ENCODE measurements at regions of chr1 and their contacts with region 1.

Region 1: DNA sequence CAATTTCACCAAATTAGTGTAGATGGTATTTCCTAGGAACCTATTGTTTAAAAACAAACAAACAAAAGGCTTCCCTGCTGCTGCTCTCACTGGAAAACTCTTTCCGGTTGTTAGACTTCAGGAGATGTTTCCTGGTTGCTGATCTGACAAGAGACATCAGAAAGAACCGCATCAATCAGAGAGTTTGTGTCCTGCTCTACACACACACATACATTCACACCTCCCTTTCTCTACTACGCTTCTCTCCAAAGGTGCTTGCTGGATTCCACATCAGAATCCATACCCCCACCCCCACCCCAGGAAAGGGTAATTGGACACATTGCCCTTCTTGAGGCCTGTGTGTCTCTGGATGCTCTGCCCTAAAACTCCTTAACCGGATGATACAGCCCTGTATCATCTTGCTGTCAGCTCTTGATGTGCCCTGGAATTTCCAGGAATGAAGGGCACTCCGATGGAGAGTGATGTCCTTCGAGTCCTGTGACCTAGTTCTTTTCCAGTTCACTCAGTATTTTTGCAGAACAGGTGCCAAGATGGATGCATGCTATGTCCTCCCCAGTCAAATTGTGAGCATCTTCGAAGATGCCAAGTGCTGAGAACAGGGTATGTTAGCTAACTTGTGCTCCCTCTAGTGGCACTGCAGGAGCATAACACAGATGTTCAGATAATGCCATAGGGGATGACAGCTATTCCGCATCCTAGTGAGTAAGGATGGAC is 113.7 kb upstream of the SLC35F3 start:
- DNase-seq: no peak
- ATAC-seq: peak; percentile 93

Region 2: DNA sequence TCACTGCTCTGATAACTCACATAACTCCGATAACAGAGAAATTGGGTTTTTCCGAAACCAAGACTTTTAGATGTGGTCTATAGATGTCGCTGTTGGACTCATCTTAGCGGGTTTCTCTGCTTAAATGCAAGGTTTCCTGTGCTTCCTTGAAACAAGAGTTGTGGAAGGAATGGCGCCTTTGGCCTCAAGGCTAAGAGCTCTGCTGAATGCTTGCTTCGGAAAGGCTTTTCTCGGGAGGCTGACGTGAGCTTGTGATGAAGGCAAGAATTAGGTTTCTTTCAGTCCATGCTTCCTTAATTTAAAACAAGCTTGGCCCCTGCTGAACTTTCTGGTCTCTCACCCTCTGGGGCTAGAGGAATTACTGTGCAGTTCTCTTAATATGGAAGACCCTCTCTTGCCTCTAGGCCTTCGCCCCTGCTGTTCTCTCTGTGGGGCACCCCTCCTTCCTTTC is 349.8 kb before region 1 on chr1:
- intact Hi-C with region 1: loop called (anchors 10 kb)
- DNase-seq: no peak
- ATAC-seq: peak; percentile 66

Region 3: DNA sequence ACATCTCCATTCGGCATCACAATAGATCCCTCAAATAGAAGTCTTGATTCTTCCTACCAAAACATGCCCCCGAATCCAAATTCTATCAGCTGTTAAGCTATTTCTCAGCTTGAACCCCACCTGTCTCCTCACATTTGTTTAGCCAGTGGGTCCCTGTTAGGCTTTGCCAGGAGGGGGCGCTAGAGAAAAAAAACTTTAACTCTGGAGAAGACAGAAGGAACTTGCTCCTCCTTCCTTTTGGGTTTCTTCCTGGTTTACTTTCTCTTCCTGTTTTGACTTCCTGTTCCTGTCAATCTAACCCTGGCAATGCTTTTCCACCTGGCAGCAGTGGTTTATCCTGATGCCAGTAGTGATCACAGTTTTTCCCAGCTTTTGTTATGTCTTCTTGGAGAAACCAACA is 272.5 kb before region 1 on chr1:
- intact Hi-C with region 1: loop called (anchors 5 kb)
- DNase-seq: no peak
- ATAC-seq: peak; percentile 46